ENCODE measurements at regions of chr14 and their contacts with region 1.

Region 1: DNA sequence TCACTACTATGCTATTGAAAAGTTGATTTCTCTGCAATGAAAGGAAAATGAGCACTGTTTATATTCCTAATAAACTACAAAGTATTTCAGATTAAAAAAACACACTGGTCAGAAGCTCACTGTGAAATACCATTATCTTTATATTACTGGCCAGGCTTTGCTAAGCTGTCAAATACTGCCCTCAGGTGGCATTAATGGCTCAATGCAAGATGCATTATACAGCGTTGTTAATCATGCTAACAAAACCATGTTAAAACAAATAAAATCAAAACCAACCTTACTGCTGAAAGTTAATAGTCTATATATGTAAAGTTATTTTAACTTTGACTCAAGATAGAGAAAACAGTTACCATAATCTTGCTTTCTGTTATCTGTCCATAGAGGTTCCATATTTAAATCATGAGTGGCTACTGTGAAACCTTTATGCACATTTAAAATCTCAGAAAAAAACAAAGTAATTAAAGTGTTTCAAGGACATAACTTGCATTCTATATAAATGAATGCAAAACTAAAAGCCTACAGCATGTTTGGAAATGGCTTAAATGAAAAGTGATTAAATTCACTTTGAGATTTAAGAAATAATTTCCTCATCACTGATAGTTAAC is 121.7 kb downstream of the RALGAPA1 start:
- DNase-seq: peak; percentile 68

Region 2: GRCh38 chr14:35438910-35439713 is 248.3 kb before region 1 on chr14:
- in situ Hi-C with region 1: loop called (anchors 25 kb)
- DNase-seq: peak; percentile 44

Region 3: DNA sequence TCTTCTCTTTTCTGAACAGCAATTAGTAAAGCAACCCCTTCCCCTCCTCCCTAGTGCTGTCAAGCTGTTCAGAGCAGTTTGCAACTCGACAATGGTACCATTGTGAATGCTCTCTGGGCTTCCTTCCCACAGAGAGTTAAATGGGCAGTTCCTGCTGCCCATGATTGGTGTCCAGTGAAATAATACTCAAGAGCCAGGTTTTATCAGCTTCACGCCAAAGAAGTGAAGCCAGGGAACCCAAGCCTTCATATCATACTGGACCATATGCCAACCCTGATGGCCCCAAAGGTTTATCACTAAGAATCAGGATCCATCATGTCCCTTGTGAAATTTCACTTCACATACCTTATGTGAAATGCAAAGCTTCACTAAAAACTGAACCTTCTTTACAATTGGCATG is 128.8 kb before region 1 on chr14:
- in situ Hi-C with region 1: loop called (anchors 25 kb)
- DNase-seq: peak; percentile 72

Measured in SK-MEL-5 (cell line).